ENCODE measurements at regions of chr2 and their contacts with region 1.

Region 1: DNA sequence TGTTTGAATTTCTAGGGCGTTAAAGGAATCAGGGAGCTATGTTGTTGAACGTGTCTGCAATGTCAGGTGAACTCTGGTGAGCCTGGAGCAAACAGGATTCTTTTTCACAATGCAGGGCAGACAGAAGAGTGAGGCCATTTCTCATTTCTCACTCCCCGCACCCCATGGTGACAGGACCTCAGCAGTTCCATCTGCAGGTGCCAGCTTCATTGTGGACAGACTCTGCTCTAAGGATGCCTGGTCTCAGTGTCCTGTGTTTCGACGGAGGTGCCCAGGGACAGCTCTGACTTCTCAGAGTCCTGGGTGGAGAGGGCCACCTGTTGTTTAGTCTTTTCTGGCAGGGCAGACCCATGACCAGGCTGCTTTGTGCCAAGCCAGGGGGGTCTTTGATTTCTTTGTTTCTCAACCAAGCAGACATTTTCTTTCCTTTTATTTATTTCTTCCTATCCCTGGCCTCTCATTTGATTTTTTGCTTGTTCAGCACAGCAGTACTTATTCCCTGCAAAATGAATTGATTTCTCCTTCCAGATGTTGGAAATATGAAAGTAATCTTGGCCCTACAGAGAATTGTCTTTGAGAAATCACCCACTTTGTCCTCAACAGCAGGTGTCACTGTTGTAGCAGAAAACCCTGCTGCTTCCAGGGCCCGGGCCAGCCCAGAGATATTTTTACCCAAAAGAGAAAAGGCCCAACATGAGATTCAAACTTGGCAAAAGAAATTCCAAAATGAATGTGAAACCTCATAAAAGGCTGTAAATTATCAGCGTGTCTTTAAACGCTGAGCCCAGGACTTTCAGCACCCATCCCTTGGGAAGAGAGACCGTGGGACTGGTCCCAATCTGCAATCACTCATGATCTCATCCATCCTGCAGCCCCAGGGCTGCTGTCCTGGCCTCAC is 201.6 kb downstream of the RNF144A start:
- DNase-seq: peak in 1 of 2 experiments; percentile 38
- H3K4me3 ChIP-seq: no peak overlapping the region
- H3K4me3 Mint-ChIP-seq: no peak overlapping the region
- H3K27ac Mint-ChIP-seq: no peak overlapping the region
- H3K4me1 ChIP-seq: no peaks in the 10 kb centered on the region
- H3K4me1 Mint-ChIP-seq: no peaks in the 10 kb centered on the region
- H3K27me3 ChIP-seq: peaks cover 2% of the 10 kb centered on the region; the same call in 1 of the 2 replicates
- H3K27me3 Mint-ChIP-seq: peaks cover 18% of the 10 kb centered on the region
- CTCF ChIP-seq: peak; percentile 46 to 55

Region 2: DNA sequence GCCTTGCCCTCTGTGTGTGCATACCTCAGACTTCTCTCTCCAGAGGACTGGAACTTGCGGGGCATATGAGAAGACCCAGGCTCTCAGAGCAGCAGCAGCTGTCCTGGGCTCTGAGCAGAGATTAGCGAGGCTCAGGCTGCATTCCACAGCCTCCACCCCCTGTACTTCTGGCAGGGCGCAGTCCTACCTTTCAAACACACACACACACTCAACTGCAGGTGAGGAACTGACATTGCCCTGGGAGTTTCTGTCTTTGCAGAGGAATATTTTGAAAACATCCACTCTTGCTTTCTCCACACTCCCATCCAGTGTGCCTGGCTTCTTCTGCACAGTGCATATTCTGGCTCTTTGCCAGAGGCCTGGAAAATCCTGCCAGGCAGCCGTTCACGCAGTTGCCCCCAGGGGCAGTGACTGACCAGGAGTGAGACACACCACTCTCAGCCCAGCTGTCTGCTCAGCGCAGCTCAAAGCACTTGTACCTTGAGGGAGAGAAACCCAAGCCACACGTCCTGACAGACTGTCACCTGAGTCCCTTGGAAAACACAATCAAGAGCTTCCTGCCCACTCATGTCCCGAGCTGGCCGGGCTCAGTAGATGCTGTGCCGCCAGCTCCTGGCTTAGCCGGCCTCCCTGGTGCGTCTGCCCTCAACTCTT is 259.2 kb after region 1 on chr2:
- CTCF ChIA-PET with region 1: no interaction called
- POLR2A ChIA-PET with region 1: no interaction called
- intact Hi-C with region 1: loop called (anchors 1 kb)
- DNase-seq: peak; percentile 19 to 41
- H3K4me3 ChIP-seq: no peak overlapping the region
- H3K4me3 Mint-ChIP-seq: no peak overlapping the region
- H3K27ac Mint-ChIP-seq: no peak overlapping the region
- H3K4me1 ChIP-seq: no peaks in the 10 kb centered on the region
- H3K4me1 Mint-ChIP-seq: no peaks in the 10 kb centered on the region
- H3K27me3 ChIP-seq: no peaks in the 10 kb centered on the region
- H3K27me3 Mint-ChIP-seq: peaks cover 10% of the 10 kb centered on the region
- CTCF ChIP-seq: peak in 1 of 2 experiments; percentile 13

Measured in Caco-2 (cell line).